H1 (cell line): ENCODE measurements at regions of chr1 and their contacts with region 1.

Region 1: DNA sequence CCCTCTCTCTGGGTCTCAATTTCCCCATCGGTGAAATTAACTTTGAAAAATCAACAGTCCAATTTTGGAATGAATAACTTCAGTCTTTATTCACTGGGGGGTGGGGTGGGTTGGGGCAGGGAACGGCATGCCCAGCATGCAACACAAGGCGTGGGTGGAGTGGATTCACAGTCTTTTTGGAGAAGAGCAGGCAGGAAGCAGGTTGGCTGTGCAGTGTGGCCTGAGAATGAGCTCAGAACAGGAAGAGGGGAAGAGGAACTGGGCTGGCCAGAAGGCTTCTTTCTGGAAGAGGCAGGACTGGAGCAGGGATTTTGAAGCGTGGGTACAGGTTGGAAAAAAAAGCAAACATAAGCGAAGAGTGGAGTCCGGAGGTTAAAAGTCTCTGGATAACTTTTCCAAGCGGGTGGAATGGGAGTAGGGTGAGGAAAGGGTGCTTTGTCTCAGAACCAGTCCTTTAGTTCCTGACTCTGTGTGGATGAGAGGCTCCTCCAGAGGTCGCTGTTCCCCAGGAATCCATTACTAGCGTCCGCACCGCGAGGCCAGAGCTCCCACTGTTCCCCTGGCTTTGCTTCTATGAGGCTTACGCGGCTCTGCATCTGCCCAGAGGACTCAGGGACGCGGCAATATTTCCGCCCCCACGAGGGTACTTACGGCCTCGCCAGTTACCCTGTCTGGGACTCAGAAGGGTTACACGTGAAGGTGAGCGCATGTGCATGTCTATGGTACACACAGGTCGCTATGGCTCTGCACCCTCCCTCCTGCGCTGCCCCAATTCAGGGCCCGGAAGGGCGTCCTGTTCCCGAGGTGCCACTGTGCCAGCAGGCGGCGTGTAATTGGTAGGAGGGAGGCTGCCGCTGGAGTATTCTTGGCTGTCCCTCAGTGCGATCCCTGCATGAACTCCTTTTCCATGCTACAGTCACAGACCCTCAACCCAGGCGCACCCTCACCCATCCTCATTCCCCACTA is 5.5 kb upstream of the FOXD2 start:
- DNase-seq: peak; percentile 58 to 94
- H3K4me3 ChIP-seq: peak overlapping the region; percentile 28 to 54 (median 42); a peak in 7 of 8 replicates
- H3K27ac ChIP-seq: no peak overlapping the region
- H3K4me1 ChIP-seq: peaks cover 3 to 36% (median 15%) of the 10 kb centered on the region in 4 experiments; a peak in 6 of 7 replicates
- H3K27me3 ChIP-seq: peaks cover 65 to 99% (median 90%) of the 10 kb centered on the region in 4 experiments
- CTCF ChIP-seq: peak in 2 of 3 experiments; percentile 83 to 87; a peak in 3 of 4 replicates
- EP300 ChIP-seq: no peak
- POLR2A ChIP-seq: no peak
- RAD21 ChIP-seq: peak; percentile 79 to 83

Region 2: DNA sequence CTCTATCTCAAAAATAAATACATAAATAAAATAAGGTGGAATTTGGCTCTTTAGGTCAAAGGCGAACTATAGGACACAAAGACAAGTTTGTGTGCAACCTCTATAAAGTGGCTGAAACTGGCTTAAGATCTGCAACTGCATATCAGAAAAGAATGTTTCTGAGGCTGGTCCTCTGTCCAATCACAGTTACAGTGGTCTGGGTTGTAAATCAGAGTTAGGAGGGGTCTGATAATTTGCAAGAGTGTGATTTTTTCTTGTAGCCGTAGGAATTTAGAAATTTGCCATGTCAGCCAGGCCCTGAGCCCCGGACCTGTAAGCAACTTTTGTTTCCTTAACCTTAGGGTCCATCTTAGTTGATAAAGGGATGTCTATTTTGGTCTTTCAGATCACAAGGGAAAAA is 71.0 kb before region 1 on chr1:
- CTCF ChIA-PET with region 1: no interaction called
- POLR2A ChIA-PET with region 1: no interaction called
- DNase-seq: no peak
- H3K4me3 ChIP-seq: no peak overlapping the region
- H3K27ac ChIP-seq: no peak overlapping the region
- H3K4me1 ChIP-seq: no peaks in the 10 kb centered on the region
- H3K27me3 ChIP-seq: no peaks in the 10 kb centered on the region
- CTCF ChIP-seq: no peak
- EP300 ChIP-seq: no peak
- POLR2A ChIP-seq: no peak
- RAD21 ChIP-seq: no peak

Region 3: DNA sequence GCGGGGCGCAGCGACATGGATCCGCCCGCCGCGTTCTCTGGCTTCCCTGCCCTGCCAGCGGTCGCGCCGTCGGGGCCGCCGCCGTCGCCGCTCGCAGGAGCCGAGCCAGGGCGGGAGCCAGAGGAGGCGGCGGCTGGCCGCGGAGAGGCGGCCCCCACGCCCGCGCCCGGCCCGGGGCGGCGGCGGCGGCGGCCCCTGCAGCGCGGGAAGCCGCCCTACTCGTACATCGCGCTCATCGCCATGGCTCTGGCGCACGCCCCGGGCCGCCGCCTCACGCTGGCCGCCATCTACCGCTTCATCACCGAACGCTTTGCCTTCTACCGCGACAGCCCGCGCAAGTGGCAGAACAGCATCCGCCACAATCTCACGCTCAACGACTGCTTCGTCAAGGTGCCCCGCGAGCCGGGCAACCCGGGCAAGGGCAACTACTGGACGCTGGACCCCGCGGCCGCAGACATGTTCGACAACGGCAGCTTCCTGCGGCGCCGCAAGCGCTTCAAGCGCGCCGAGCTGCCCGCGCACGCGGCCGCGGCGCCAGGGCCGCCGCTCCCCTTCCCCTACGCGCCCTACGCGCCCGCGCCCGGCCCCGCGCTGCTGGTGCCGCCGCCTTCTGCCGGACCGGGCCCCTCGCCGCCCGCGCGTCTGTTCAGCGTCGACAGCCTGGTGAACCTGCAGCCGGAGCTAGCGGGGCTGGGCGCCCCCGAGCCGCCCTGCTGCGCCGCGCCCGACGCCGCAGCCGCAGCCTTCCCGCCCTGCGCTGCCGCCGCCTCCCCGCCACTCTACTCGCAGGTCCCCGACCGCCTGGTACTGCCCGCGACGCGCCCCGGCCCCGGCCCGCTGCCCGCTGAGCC is 15.8 kb before region 1 on chr1:
- CTCF ChIA-PET with region 1: interaction called, 140 read pairs
- POLR2A ChIA-PET with region 1: interaction called, 4 read pairs
- DNase-seq: peak in 1 of 2 experiments; percentile 77
- H3K4me3 ChIP-seq: peak overlapping the region; percentile 29 to 58 (median 31); a peak in 7 of 8 replicates
- H3K27ac ChIP-seq: no peak overlapping the region
- H3K4me1 ChIP-seq: no peaks in the 10 kb centered on the region; a peak in 1 of 7 replicates
- H3K27me3 ChIP-seq: peaks cover 43 to 78% (median 72%) of the 10 kb centered on the region in 4 experiments
- CTCF ChIP-seq: no peak
- EP300 ChIP-seq: no peak
- POLR2A ChIP-seq: no peak
- RAD21 ChIP-seq: no peak

Region 4: DNA sequence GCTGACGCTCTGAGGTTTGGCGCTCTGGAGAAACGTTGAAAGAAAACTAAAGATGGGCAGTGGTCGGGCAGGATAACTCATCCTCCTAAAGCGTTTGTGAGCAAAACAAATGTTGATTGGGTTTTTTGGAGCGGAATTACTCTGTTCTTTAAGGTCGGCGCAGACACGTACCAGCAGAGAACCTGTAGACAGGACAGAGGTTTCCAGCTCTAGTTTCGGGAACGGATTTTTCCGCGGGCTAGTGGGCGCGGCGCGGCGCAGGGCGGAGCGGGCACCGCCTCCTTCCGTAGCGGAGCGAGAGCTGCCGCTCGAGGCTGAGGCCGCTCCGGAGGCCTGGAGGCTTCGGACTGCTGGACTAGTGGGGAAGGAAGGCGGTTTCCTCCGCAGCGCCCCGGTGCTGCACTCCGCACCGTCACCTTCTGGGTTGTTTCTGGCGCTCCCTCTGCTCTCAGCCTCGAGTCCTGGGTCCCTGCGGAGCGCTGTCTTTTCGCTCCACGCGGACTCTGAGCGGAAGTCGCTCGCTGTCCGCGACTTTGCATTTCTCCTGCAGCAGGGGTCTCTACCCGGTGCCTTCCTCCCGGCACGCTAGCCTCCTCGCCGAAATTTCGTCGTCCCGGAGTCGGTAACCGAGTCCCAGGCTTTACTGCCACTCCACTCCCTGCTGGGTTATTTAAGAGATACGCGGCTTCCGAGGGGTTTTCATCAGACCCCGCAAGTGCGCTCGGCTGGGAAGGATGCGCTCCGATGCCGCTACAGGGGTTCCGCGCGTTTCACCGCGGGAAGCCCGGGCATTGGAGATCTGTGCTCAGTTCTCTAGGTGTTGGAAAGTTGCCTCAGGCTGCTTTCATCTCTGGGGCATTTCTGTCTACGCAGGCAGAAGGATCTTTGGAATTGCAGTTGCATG is 12.5 kb after region 1 on chr1:
- CTCF ChIA-PET with region 1: interaction called, 46 read pairs
- POLR2A ChIA-PET with region 1: interaction called, 4 read pairs
- DNase-seq: peak in 1 of 2 experiments; percentile 77
- H3K4me3 ChIP-seq: peak overlapping the region; percentile 5 to 46 (median 23); a peak in 6 of 8 replicates
- H3K27ac ChIP-seq: no peak overlapping the region
- H3K4me1 ChIP-seq: peaks cover 10 to 31% (median 18%) of the 10 kb centered on the region in 4 experiments
- H3K27me3 ChIP-seq: peaks cover 96 to 100% (median 98%) of the 10 kb centered on the region in 4 experiments
- CTCF ChIP-seq: no peak
- EP300 ChIP-seq: no peak
- POLR2A ChIP-seq: no peak
- RAD21 ChIP-seq: no peak

Region 5: GRCh38 chr1:47521034-47521881 is 88.9 kb after region 1 on chr1:
- CTCF ChIA-PET with region 1: interaction called, 26 read pairs
- POLR2A ChIA-PET with region 1: no interaction called
- DNase-seq: no peak
- H3K4me3 ChIP-seq: no peak overlapping the region
- H3K27ac ChIP-seq: no peak overlapping the region
- H3K4me1 ChIP-seq: peaks cover 3 to 16% (median 6%) of the 10 kb centered on the region in 4 experiments; a peak in 6 of 7 replicates
- H3K27me3 ChIP-seq: peaks cover 0 to 4% (median 0%) of the 10 kb centered on the region in 4 experiments; a peak in 4 of 7 replicates
- CTCF ChIP-seq: no peak
- EP300 ChIP-seq: no peak
- POLR2A ChIP-seq: no peak
- RAD21 ChIP-seq: no peak

Region 6: DNA sequence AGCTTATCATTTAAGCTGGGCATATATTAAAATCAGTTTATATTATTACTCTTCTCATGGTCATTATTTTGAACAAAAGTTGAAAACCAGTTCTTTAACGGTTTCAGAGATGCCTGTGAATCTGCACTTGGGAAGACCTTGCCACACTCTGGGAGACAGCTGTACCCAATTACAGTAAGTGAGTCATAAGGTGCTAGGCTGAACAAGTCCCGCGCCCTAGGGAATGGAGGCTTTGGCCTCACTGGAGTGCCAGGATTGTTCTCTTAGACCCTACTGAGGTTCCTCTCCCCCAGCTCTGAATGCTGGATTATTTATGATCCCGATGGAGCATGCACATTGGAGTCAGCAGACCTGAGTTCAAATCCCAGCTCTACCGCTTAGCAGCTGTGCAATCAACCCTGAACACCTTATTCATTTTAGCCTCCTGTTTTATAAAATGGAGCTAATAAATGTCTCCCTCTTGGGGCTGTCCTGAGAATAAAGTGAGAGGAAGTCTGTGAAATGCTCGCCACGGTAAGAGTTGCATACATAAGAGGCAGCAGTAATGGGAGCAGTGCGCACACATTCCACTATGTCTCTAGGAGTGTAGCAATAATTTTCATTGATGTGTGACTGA is 271.7 kb after region 1 on chr1:
- CTCF ChIA-PET with region 1: interaction called, 77 read pairs
- POLR2A ChIA-PET with region 1: no interaction called
- DNase-seq: no peak
- H3K4me3 ChIP-seq: no peak overlapping the region
- H3K27ac ChIP-seq: no peak overlapping the region
- H3K4me1 ChIP-seq: peaks cover 0 to 9% (median 1%) of the 10 kb centered on the region in 4 experiments; a peak in 3 of 7 replicates
- H3K27me3 ChIP-seq: peaks cover 19 to 34% (median 32%) of the 10 kb centered on the region in 4 experiments
- CTCF ChIP-seq: peak in 1 of 3 experiments; percentile 4; a peak in 1 of 4 replicates
- EP300 ChIP-seq: no peak
- POLR2A ChIP-seq: no peak
- RAD21 ChIP-seq: peak; percentile 20 to 42; a peak in 3 of 4 replicates